GM18951 (cell line): ENCODE measurements at regions of chr14 and their contacts with region 1.

Region 1: DNA sequence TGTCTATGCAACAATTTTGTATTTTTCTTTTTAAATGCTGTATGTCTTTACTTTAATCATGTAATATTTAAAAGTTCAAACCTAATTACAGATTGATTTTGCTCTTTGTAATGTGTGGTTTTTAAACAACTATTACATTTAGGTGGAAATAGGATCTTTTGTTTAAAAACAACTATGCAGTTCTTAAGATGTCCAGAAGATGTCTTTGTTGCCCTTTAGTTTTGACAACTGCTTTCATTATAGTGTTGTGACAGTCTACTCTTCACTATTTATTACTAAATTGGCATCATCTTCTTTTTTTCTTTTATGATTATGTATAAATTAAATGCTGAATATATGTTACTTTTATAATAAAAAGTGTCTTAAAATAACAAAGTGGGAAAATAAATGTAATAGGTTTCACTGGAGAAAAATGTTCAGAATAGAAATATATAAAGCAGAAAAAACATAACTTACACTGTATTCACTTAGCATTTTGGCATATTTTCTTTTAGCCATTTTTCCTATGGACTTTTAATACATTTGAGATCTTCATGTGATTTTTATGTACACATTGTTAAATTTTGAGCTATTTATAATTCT is 27.1 kb upstream of the PCNX4 start:
- POLR2A ChIP-seq: no peak

Region 2: DNA sequence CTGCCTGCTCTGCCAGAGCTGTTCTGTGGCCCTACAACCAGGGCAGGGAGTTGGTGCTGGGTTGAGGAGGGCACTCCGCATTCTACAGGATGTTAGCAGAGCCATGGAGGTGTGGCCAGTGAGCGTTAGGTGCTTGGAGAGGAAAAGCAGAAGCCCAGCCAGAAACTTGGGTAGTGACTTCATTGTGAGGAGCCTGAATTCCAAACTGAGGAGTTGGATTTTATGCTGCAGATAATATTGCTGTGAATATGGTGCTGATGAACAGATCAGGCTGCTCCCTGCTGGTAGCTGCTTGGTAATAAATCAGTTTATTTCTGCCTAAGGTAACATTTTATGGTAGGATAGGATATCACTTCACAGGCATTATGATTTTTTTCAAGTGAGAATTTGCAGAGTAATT is 480.8 kb before region 1 on chr14:
- in situ Hi-C with region 1: no loop called
- POLR2A ChIP-seq: no peak

Region 3: DNA sequence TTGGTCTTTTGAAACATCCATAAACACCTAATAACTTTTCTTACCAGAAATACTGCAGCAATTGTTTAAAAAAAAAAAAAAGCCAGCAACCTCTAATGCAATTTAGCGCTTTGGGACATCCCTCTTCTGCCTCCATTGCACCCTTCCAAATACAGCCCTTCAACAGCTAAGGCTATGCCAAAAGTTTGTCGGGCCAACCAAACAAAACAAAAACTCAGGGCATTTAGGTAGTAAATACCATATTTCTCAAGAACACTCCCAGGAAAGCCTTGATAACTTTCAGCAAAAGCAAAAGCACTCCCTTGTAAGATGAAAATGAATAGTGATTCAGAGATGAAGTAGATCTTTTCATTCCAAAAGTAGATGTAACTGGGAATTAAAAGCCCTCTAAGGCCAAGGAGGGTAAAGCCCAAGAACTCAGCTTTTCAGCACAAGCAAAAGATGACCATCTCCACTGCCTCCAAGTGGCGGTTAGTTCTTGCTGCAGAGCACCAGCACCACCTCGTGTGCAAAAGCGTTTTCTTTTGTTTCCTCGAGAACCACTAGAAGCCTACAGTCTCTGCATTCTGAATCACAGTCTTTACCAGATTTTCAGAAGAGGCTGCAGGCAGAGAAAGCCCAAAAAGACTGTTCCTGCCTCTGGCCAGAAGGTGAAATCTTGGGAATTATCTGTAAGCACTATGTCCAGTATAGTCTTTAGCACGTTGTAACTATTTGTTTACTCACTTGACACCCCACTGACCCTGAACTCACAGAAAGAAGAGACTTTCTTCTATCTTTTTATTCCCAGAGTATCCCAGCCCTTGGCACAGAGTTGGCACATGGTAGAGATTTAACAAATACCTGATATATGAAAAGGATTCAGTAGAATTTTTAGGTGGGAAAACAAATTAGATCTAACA is 497.5 kb after region 1 on chr14:
- in situ Hi-C with region 1: loop called (anchors 25 kb)
- POLR2A ChIP-seq: no peak